Heart left ventricle (tissue), 16 donors: ENCODE measurements at regions of chr6 and their contacts with region 1.

Region 1: GRCh38 chr6:46221222-46221793 is 50.5 kb upstream of the ENPP5 start:
- DNase-seq: no peak
- ATAC-seq: peak in 3 of 4 donors; percentile 35 to 67 (median 55)
- H3K4me3 ChIP-seq: no peak overlapping the region
- H3K27ac ChIP-seq: no peak overlapping the region
- H3K4me1 ChIP-seq: peaks cover 0 to 35% (median 7%) of the 10 kb centered on the region in 12 donors
- H3K27me3 ChIP-seq: no peaks in the 10 kb centered on the region
- CTCF ChIP-seq: peak; percentile 72 to 90 (median 84)
- POLR2A ChIP-seq: no peak

Region 2: GRCh38 chr6:45930420-45931040 is 290.8 kb before region 1 on chr6:
- intact Hi-C with region 1: loop called in 1 of 10 experiments (anchors 5 kb)
- DNase-seq: peak; percentile 68 to 83 (median 70)
- ATAC-seq: peak; percentile 59 to 80 (median 74)
- H3K4me3 ChIP-seq: no peak overlapping the region
- H3K27ac ChIP-seq: peak overlapping the region in 9 of 12 donors; percentile 7 to 58 (median 22)
- H3K4me1 ChIP-seq: peaks cover 0 to 61% (median 20%) of the 10 kb centered on the region in 12 donors
- H3K27me3 ChIP-seq: no peaks in the 10 kb centered on the region
- CTCF ChIP-seq: peak; percentile 95 to 99 (median 96)
- POLR2A ChIP-seq: peak in 1 of 2 donors; percentile 23

Region 3: DNA sequence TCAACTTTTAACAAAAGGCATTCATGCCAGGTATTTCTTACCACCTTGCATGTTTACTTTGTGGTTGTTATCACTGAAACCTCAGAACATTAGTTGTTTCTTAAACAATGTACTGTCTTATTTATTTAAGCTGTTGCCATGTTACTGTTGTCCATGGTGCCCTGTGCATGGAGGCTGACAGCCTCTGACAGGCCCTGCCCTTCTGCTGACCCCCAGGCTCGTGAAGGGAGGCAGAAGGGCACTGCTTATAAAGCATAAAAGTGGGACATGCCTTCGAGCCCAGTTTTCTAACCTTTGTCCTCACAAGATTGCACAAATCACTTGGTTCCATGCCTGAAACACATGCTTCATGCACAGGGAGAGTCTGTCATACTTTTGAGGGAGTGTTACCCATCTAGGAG is 159.0 kb before region 1 on chr6:
- intact Hi-C with region 1: no loop called
- DNase-seq: no peak
- ATAC-seq: peak in 3 of 4 donors; percentile 24 to 54 (median 38)
- H3K4me3 ChIP-seq: no peak overlapping the region
- H3K27ac ChIP-seq: no peak overlapping the region
- H3K4me1 ChIP-seq: peaks cover 0 to 10% (median 0%) of the 10 kb centered on the region in 12 donors
- H3K27me3 ChIP-seq: no peaks in the 10 kb centered on the region
- CTCF ChIP-seq: no peak
- POLR2A ChIP-seq: no peak

Region 4: GRCh38 chr6:46410334-46410953 is 189.1 kb after region 1 on chr6:
- intact Hi-C with region 1: loop called (anchors 1 to 5 kb)
- DNase-seq: peak in 2 of 5 donors; percentile 16 to 26
- ATAC-seq: peak in 1 of 4 donors; percentile 17
- H3K4me3 ChIP-seq: no peak overlapping the region
- H3K27ac ChIP-seq: peak overlapping the region in 10 of 12 donors; percentile 4 to 63 (median 42)
- H3K4me1 ChIP-seq: peaks cover 3 to 69% (median 40%) of the 10 kb centered on the region in 12 donors
- H3K27me3 ChIP-seq: no peaks in the 10 kb centered on the region
- CTCF ChIP-seq: peak; percentile 57 to 91 (median 78)
- POLR2A ChIP-seq: no peak

Region 5: DNA sequence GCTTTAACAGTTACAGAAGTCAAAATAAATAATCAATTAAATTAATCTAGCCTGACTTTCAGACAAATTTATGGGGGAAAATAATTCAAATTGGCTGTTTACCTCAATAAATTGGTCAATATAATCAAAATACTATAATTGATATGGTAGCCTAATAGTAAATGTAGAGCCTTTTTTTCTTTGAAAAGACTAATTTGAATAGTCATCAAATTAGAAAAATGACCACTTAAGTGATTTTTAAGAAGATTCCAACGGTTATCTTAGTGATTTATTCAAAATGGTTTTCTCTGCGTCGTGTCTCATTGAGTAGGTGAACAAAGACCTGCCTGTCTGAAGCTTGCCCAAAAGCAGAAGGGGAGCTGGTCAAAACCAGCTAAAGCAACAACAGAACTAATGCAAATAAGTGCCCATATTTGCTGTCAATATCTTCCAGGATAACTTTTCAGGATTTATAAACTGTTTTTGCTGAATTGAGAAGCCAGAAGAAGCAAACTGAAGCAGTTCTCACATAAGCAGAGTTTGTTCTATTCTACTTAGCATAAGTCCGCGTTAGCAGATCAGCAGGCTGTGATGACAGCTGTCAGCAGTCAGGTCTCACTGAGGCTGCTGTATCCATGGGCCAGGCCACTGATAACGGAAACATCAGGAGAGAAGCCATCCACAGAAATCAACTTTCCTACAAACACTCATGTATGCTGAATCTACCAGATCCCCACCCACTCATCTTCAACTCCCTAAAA is 262.9 kb after region 1 on chr6:
- intact Hi-C with region 1: loop called in 1 of 10 experiments (anchors 10 kb)
- DNase-seq: peak; percentile 44 to 79 (median 54)
- ATAC-seq: peak; percentile 78 to 83 (median 82)
- H3K4me3 ChIP-seq: no peak overlapping the region
- H3K27ac ChIP-seq: peak overlapping the region; percentile 12 to 94 (median 82)
- H3K4me1 ChIP-seq: peaks cover 0 to 70% (median 32%) of the 10 kb centered on the region in 12 donors
- H3K27me3 ChIP-seq: peaks cover 0 to 10% (median 0%) of the 10 kb centered on the region in 9 donors
- CTCF ChIP-seq: no peak
- POLR2A ChIP-seq: no peak

Region 6: DNA sequence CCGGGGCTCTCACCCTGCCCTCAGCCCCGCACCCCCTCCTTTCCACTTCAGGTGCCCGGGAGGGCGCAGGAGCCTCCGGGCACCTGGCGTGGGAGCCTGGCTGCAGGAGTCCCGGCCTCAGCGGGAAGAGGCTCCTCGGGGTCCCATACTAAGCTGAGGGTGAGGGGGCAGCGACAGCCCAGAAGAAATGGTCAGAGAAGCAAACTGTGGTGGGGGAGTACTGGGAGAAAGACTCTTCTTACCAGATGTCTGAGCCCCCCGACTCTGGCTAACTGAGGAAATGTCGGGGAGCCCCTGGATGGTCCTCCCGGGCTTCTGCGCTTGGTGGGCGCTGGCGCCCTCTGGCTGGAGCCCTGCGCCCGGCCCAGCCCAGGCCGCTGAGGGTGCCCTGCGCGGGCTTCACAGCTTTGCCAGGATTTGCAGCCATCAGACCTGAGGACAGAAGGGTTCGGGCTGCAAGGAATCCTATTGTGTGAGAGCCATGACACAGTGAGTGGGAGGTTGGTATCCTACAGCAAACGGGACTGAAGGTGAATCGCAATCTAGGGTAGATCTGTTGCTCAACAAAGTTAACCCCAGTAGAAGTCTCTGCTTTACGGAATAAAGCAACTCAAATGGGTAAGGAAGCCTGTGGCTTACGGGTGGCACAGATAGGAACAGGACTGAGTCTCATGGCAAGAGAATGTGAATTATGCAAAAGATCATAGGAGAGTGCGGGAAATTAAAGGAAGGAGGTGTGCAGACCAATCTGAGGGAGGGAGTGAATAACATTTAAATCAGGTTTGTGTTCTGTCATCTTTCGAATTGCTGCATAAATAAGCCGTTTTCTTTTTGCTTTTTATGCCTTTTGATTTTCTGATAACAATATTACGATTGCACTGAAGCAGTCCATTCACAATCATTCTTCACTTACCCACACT is 270.6 kb after region 1 on chr6:
- intact Hi-C with region 1: loop called in 5 of 10 experiments (anchors 2 to 10 kb)
- DNase-seq: peak; percentile 66 to 77 (median 77)
- ATAC-seq: peak; percentile 86 to 91 (median 88)
- H3K4me3 ChIP-seq: peak overlapping the region; percentile 43 to 94 (median 72)
- H3K27ac ChIP-seq: peak overlapping the region; percentile 70 to 94 (median 92)
- H3K4me1 ChIP-seq: peaks cover 0 to 37% (median 14%) of the 10 kb centered on the region in 12 donors
- H3K27me3 ChIP-seq: peaks cover 0 to 38% (median 0%) of the 10 kb centered on the region in 9 donors
- CTCF ChIP-seq: peak; percentile 53 to 90 (median 71)
- POLR2A ChIP-seq: no peak

Region 7: GRCh38 chr6:46626228-46626909 is 405.1 kb after region 1 on chr6:
- intact Hi-C with region 1: loop called in 6 of 10 experiments (anchors 5 to 10 kb)
- DNase-seq: no peak
- ATAC-seq: peak in 1 of 4 donors; percentile 59
- H3K4me3 ChIP-seq: peak overlapping the region in 2 of 12 donors; percentile 23 to 28
- H3K27ac ChIP-seq: no peak overlapping the region
- H3K4me1 ChIP-seq: peaks cover 0 to 11% (median 0%) of the 10 kb centered on the region in 12 donors
- H3K27me3 ChIP-seq: no peaks in the 10 kb centered on the region
- CTCF ChIP-seq: peak; percentile 37 to 77 (median 68)
- POLR2A ChIP-seq: no peak

Region 8: DNA sequence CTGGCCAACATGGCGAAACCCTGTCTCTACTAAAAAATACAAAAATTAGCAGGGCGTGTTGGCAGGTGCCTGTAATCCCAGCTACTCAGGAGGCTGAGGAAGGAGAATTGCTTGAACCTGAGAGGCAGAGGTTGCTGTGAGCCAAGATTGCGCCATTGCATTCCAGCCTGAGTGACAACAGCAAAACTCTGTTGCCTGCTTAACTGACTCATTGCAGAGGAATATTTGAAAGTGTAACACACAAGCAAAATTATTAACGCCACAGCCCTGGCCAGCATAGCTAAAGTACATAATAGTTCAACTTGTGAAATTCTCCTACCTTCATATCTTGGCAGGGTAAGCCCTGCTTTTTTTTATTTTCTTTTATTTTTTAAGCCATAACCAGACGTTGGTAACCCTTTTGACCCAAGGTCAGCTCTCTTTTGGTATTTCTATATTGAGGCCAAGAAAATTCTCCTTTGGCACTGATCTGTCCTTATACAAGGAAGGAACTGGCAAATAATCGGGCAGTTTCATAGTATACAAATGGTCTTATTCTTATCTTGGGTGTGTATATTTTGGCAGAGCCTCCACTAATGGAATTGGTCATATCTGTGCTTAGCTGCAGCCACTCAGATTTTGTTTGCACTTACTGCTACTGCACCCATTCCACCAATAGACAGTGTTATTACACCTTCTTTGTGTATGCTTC is 704.4 kb after region 1 on chr6:
- intact Hi-C with region 1: no loop called
- DNase-seq: peak in 1 of 5 donors; percentile 37
- ATAC-seq: peak in 2 of 4 donors; percentile 60 to 65
- H3K4me3 ChIP-seq: no peak overlapping the region
- H3K27ac ChIP-seq: peak overlapping the region in 6 of 12 donors; percentile 29 to 93 (median 50)
- H3K4me1 ChIP-seq: peaks cover 0 to 37% (median 11%) of the 10 kb centered on the region in 12 donors
- H3K27me3 ChIP-seq: no peaks in the 10 kb centered on the region
- CTCF ChIP-seq: no peak
- POLR2A ChIP-seq: no peak

Region 9: DNA sequence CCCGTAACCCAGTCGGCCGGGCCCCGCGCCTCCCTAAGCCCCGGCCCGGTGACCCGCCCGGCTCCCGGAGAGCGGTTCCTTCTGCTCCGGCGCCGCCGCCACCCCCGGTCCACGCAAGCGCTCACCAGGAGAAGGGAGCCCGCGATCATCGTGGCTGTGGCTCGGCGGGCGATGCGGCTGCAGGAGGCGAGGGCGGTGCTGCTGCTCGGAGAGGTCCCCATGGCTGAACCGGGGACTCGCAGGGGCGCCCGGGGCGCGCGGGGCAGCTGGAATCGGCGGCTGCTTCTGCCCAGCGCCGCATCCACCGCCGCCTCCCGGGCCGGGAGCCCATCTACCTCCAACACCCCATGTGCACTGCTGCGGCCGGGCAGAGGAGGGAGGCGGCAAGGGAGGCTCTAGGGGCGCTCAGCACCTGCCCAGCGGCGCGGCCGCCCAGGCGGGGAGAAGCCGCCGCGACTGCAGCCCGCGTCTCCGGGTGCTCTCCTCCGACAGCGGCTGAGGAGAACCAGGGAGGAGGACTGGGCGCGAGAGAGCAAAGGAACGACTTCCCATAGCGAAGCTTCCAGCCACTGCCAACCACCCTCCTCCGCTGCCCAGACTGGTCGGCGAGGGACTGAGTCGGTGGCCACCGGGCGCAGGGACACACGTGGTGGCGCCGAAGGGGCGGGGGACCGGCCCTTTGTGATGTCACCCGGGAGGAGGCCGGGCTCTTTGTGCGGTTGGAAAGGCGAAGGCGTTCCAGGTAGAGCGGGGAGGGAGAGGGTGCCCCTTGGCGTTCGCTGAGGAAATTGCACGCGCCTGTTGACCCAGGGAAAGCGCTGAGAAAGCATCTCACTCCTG is 1088.2 kb after region 1 on chr6 and contains the start of gene TNFRSF21:
- intact Hi-C with region 1: no loop called
- DNase-seq: peak; percentile 92 to 94 (median 93)
- ATAC-seq: peak; percentile 98 to 100 (median 99)
- H3K4me3 ChIP-seq: peak within 1 kb of the TSS; percentile 60 to 79 (median 74)
- H3K27ac ChIP-seq: peak within 1 kb of the TSS; percentile 23 to 87 (median 62)
- H3K4me1 ChIP-seq: peaks cover 0 to 12% (median 3%) of the 10 kb centered on the region in 12 donors
- H3K27me3 ChIP-seq: peaks cover 0 to 32% (median 15%) of the 10 kb centered on the region in 9 donors
- CTCF ChIP-seq: peak; percentile 88 to 98 (median 96)
- POLR2A ChIP-seq: peak in 1 of 2 donors; percentile 75
- total RNA-seq, gene TNFRSF21: 3.7 to 18.1 (median 6.0) TPM